ENCODE measurements at regions of chr20 and their contacts with region 1.

Region 1: GRCh38 chr20:25254986-25255680 is 7.2 kb downstream of the PYGB start:
- DNase-seq: peak; percentile 68
- H3K4me3 Mint-ChIP-seq: peak overlapping the region; percentile 93
- H3K27ac Mint-ChIP-seq: peak overlapping the region; percentile 87
- H3K4me1 Mint-ChIP-seq: peaks cover 43% of the 10 kb centered on the region
- H3K27me3 Mint-ChIP-seq: no peaks in the 10 kb centered on the region
- CTCF ChIP-seq: peak; percentile 15

Region 2: DNA sequence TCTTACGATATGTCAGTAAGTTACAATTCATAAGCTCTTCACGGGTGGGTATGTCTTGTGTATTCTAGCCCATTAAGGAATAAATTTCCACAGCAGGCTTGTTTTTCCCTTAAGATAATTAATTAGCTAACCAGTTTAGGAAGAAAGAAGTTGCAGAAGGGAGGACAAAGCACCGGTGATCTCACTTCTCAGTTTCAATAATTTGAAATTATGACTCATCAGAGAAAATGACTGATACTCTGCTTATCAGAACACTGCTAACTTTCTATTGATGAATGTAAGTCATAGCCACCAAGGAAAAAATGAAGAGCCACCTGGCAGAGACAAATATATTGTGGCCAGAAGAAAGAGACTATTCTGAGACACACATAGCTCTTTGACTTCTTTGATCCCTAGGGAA is 94.7 kb before region 1 on chr20:
- CTCF ChIA-PET with region 1: no interaction called
- POLR2A ChIA-PET with region 1: no interaction called
- intact Hi-C with region 1: no loop called
- DNase-seq: no peak
- H3K4me3 Mint-ChIP-seq: no peak overlapping the region
- H3K27ac Mint-ChIP-seq: no peak overlapping the region
- H3K4me1 Mint-ChIP-seq: no peaks in the 10 kb centered on the region
- H3K27me3 Mint-ChIP-seq: no peaks in the 10 kb centered on the region
- CTCF ChIP-seq: no peak

Region 3: GRCh38 chr20:25195014-25195961 is 59.8 kb before region 1 on chr20 and contains the start of gene ENTPD6:
- CTCF ChIA-PET with region 1: interaction called, 3 read pairs
- POLR2A ChIA-PET with region 1: interaction called, 105 read pairs
- intact Hi-C with region 1: no loop called
- DNase-seq: peak; percentile 86
- H3K4me3 Mint-ChIP-seq: peak within 1 kb of the TSS; percentile 77
- H3K27ac Mint-ChIP-seq: peak within 1 kb of the TSS; percentile 5
- H3K4me1 Mint-ChIP-seq: peaks cover 28% of the 10 kb centered on the region
- H3K27me3 Mint-ChIP-seq: no peaks in the 10 kb centered on the region
- CTCF ChIP-seq: no peak
- total RNA-seq, gene ENTPD6: 98.0 and 99.5 TPM in 2 replicates

Region 4: DNA sequence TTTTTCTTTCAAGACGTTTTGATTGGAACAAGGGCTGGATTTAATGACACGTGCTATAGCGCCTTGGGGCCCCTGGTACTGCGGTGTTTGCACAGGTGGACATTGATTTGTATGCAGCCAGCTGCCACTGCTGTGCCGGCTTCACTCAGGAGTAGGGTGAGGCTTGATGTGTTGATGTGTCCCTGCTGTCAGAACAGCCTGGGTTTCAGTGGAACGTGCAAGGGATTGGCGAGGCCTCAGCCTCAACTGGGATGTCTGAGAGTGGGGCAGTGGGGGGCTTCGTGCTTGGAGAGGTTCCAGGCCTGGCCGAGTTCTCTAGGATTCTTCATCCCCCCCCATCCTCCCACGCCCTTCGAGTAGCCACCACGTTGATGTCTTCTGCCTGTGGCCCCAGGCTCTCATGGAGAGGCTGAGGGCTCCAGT is 15.7 kb after region 1 on chr20:
- CTCF ChIA-PET with region 1: interaction called, 4 read pairs
- POLR2A ChIA-PET with region 1: interaction called, 20 read pairs
- intact Hi-C with region 1: no loop called
- DNase-seq: no peak
- H3K4me3 Mint-ChIP-seq: no peak overlapping the region
- H3K27ac Mint-ChIP-seq: no peak overlapping the region
- H3K4me1 Mint-ChIP-seq: peaks cover 7% of the 10 kb centered on the region
- H3K27me3 Mint-ChIP-seq: no peaks in the 10 kb centered on the region
- CTCF ChIP-seq: no peak

Measured in MCF 10A (cell line).